ENCODE measurements at regions of chr15 and their contacts with region 1.

Region 1: GRCh38 chr15:92881802-92882696 is 18.1 kb upstream of the CHD2 start:
- DNase-seq: peak; percentile 99
- ATAC-seq: peak; percentile 92

Region 2: DNA sequence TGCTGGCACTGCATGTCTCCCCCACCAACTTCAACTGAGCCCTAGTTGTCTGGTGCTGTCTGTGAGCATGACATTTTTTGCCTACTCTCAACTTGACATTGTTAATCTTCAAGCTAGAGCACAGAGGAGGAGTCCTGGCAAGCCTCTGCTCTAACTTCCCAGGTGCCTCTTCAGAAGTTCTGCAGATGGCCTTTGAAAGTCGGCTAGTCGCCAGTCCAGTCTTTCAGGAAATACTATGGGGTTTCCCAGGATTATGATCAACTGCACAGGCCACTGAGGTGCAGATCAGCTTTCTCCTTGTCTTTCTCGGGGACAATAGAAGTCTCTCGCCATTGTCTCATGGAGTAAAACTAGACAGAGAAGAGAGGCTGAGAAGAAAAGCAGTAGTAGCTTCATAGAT is 401.7 kb before region 1 on chr15:
- intact Hi-C with region 1: no loop called
- DNase-seq: no peak
- ATAC-seq: no peak

Region 3: GRCh38 chr15:92808978-92809879 is 72.8 kb before region 1 on chr15:
- intact Hi-C with region 1: loop called (anchors 2 kb)
- DNase-seq: peak; percentile 99
- ATAC-seq: peak; percentile 89

Region 4: DNA sequence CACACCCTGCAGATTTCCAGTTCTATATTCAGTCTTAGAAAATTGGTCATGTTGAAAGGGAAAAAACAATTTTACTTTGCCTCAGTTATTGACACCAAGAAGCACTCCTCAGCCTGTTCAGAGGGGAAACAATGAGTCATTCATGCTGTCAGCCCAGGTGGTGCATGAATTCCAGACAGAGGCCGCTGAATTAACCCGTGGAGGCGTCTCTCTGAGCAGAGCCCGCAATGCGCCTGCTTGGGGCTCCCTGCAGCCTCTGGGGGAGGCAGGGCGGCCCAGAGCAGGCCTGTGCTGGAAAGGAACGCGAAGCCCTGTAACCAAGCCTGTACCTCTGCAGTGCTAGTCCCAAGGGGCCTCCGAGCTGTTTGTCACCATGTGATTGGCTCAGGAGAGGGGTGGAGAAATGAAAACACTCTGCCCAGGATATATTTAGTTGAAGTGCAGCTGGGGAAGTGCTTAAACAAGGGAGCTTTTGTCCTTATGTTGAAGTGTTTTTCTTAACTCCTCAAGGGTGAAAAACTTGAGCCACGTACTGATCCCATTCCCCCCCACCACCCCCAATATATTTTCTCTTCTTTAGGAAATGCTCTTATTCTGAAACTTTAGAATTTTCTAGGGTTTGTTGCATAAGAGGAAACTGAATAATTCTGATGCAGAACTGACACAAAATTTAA is 50.3 kb before region 1 on chr15:
- intact Hi-C with region 1: loop called (anchors 5 kb)
- DNase-seq: peak; percentile 94
- ATAC-seq: peak; percentile 96

Region 5: GRCh38 chr15:92903941-92904831 is 22.1 kb after region 1 on chr15:
- intact Hi-C with region 1: loop called (anchors 2 kb)
- DNase-seq: peak; percentile 99
- ATAC-seq: peak; percentile 91

Region 6: DNA sequence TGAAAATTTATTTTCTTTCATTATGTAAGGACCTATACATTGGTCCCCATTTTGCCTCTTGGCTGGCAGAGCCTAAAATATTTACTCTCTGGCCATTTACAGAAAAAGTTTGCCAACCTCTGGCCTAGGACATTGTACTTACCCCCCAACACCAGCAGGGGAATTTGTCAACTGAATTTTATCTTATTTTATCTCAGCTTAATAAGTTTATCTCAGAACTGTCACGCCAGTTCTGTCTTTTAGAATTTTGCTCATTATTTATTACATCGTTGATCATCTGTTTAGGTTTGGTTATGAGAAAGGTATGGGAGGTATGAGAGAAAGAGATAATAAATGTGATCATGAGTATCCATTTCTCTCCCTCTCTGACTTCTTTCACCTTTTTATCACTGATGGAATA is 56.3 kb after region 1 on chr15:
- intact Hi-C with region 1: no loop called
- DNase-seq: no peak
- ATAC-seq: no peak